ENCODE measurements at regions of chr16 and their contacts with region 1.

Region 1: DNA sequence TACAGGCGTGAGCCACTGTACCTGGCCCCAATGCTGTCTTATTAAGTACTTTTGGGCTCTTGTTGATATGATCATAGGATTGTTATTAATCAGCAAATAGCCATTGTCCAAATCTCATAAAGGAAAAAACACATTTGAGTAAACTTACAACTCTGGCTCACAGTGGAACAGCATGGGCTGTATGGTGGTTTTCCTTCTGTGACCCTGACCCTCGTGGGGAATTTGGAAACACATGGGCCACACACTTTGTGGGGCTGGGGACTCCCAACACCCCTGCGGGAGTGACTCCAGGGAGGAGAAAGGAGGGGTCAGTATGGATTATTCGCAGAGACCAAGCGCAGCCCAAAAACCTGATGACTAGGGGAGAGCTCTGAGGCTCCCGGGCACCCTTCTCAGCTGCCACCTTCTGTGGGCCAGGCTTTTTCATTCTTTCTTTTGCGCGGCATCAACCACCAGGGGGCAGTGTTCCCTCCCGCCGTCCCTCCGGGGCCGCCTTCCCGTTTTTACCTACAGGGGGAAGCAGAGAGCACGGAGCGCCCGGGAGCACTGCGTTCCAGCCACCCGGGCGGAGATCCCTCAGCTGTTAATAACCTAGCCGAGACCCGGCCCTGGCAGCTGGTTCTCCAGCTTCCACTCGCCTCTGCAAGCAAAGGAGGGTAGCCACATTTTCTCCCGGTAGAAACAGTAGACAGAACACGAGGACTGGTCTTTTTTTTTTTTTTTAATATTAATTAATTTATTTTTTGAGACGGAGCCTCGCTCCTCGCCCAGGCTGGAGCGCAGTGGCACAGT is 9.7 kb downstream of the TSNAXIP1 start:
- DNase-seq: peak; percentile 83
- H3K4me3 ChIP-seq: no peak overlapping the region
- H3K27ac ChIP-seq: no peak overlapping the region
- H3K4me1 ChIP-seq: no peaks in the 10 kb centered on the region
- H3K27me3 ChIP-seq: no peaks in the 10 kb centered on the region

Region 2: DNA sequence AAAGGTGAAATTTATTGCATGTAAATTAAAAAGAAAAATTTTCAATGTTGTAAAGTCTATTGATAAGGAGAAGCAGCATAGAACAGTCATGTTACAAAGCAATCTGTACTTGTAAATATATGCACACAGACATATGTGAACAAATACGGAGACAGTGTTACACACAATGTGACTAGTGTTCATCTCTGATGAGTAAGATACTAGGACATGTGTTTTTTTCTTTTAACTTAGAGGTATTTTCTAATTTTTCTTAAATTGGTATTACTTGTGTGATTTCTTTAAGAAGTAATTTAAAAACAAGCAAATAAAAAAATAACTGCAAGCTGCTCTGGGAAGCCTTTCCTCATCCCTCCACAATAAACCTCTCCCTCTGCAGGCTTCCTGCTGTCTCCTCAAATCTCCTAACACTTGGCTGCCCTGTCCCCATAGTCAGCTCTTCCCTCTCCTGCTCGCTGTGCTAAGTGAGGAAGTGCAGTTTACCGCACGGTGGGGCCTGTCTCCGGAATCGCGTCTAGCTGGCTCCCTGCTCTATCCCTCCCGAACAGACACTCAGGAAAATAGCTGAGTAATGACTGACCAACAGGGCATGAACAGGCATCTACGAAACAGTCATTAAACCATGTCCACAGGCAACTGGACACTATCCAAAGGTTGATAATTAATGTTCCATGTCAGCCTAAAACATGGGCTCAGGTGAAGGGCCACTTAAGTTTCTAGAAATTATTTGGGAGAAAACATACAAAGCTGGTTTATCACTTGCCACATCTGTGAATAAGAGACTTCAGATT is 1155.8 kb before region 1 on chr16:
- in situ Hi-C with region 1: no loop called
- DNase-seq: peak; percentile 94
- H3K4me3 ChIP-seq: peak overlapping the region; percentile 47
- H3K27ac ChIP-seq: peak overlapping the region; percentile 95
- H3K4me1 ChIP-seq: peaks cover 51% of the 10 kb centered on the region
- H3K27me3 ChIP-seq: no peaks in the 10 kb centered on the region

Region 3: GRCh38 chr16:67928561-67929364 is 112.3 kb after region 1 on chr16:
- in situ Hi-C with region 1: loop called (anchors 10 kb)
- DNase-seq: peak; percentile 78
- H3K4me3 ChIP-seq: no peak overlapping the region
- H3K27ac ChIP-seq: no peak overlapping the region
- H3K4me1 ChIP-seq: no peaks in the 10 kb centered on the region
- H3K27me3 ChIP-seq: no peaks in the 10 kb centered on the region